ENCODE measurements at regions of chr6 and their contacts with region 1.

Region 1: GRCh38 chr6:7238900-7239589 is 74.0 kb downstream of the SSR1 start:
- DNase-seq: peak; percentile 82
- ATAC-seq: peak; percentile 87
- H3K4me3 Mint-ChIP-seq: no peak overlapping the region
- H3K27ac Mint-ChIP-seq: no peak overlapping the region
- H3K4me1 Mint-ChIP-seq: peaks cover 24% of the 10 kb centered on the region
- H3K27me3 Mint-ChIP-seq: no peaks in the 10 kb centered on the region

Region 2: GRCh38 chr6:6724539-6725467 is 514.2 kb before region 1 on chr6:
- CTCF ChIA-PET with region 1: interaction called, 10 read pairs
- POLR2A ChIA-PET with region 1: no interaction called
- DNase-seq: peak; percentile 54
- ATAC-seq: peak; percentile 69
- H3K4me3 Mint-ChIP-seq: peak overlapping the region; percentile 3
- H3K27ac Mint-ChIP-seq: no peak overlapping the region
- H3K4me1 Mint-ChIP-seq: peaks cover 13% of the 10 kb centered on the region
- H3K27me3 Mint-ChIP-seq: peaks cover 30% of the 10 kb centered on the region

Region 3: GRCh38 chr6:6758915-6759654 is 480.0 kb before region 1 on chr6:
- CTCF ChIA-PET with region 1: interaction called, 14 read pairs
- POLR2A ChIA-PET with region 1: no interaction called
- DNase-seq: peak; percentile 38
- ATAC-seq: no peak
- H3K4me3 Mint-ChIP-seq: no peak overlapping the region
- H3K27ac Mint-ChIP-seq: no peak overlapping the region
- H3K4me1 Mint-ChIP-seq: no peaks in the 10 kb centered on the region
- H3K27me3 Mint-ChIP-seq: peaks cover 9% of the 10 kb centered on the region

Region 4: GRCh38 chr6:7086488-7086887 is 152.6 kb before region 1 on chr6:
- CTCF ChIA-PET with region 1: interaction called, 20 read pairs
- POLR2A ChIA-PET with region 1: interaction called, 3 read pairs
- DNase-seq: peak; percentile 47
- ATAC-seq: peak; percentile 67
- H3K4me3 Mint-ChIP-seq: peak overlapping the region; percentile 57
- H3K27ac Mint-ChIP-seq: peak overlapping the region; percentile 37
- H3K4me1 Mint-ChIP-seq: peaks cover 32% of the 10 kb centered on the region
- H3K27me3 Mint-ChIP-seq: peaks cover 16% of the 10 kb centered on the region

Region 5: DNA sequence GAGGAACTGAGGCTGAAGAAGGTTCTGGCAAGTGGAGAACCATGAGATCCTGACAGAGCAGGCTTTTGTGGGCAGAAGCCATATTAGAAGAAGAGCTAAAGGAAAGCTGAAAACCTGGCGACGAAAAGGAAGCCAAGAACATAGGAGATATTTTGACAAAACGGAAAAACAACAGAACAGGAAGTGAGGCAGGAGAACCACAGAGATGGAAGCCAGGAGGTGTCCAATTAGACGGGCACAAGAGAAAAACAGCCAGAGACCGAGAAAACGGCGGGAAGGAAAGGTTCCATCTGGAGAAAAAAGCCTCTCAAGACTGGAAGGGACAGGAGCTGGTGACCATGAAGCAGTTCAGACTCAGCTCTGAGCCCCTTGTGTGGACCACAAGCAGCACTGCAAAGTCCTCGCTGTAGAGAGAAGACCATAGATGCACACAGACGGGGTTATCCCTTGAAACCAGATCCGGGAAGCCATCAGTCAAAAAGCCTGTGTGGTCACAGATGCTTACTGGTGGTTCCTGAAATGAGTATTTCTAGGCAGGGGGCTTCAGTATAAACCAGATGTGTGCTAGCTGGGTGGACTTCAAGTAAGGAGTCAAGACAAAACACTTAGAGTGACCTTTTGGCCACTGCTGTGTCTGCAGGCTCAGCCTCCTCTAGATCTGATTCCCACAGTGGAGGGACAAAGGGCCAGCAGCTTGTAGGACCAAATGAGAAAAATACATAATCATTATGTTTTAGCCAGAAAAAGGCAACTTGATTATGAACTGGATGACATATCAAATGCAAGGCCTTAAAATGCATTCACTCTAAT is 43.3 kb after region 1 on chr6:
- CTCF ChIA-PET with region 1: no interaction called
- POLR2A ChIA-PET with region 1: no interaction called
- DNase-seq: no peak
- ATAC-seq: peak; percentile 47
- H3K4me3 Mint-ChIP-seq: no peak overlapping the region
- H3K27ac Mint-ChIP-seq: peak overlapping the region; percentile 76
- H3K4me1 Mint-ChIP-seq: peaks cover 16% of the 10 kb centered on the region
- H3K27me3 Mint-ChIP-seq: no peaks in the 10 kb centered on the region

Measured in activated CD8-positive, alpha-beta T cell treated with anti-CD3 and anti-CD28 coated beads, Interleukin-2, amount 10 ng/mL, durations not matched to agents 7 days and 5 days (primary cell).